ENCODE measurements at regions of chr3 and their contacts with region 1.

Region 1: GRCh38 chr3:170357176-170357919 is at the start of gene SKIL:
- DNase-seq: peak; percentile 96
- H3K4me3 Mint-ChIP-seq: peak within 1 kb of the TSS; percentile 77
- H3K27ac Mint-ChIP-seq: peak within 1 kb of the TSS; percentile 94
- H3K4me1 Mint-ChIP-seq: peaks cover 42% of the 10 kb centered on the region
- H3K27me3 Mint-ChIP-seq: no peaks in the 10 kb centered on the region
- total RNA-seq, gene SKIL: 20.9 to 22.7 TPM

Region 2: GRCh38 chr3:169812332-169813235 is 544.8 kb before region 1 on chr3 and contains the starts of genes LRRC34 and LRRIQ4:
- CTCF ChIA-PET with region 1: no interaction called
- POLR2A ChIA-PET with region 1: no interaction called
- intact Hi-C with region 1: loop called (anchors 5 kb)
- DNase-seq: peak; percentile 88
- H3K4me3 Mint-ChIP-seq: peak within 1 kb of the TSS; percentile 75
- H3K27ac Mint-ChIP-seq: peak within 1 kb of the TSS; percentile 43
- H3K4me1 Mint-ChIP-seq: peaks cover 19% of the 10 kb centered on the region
- H3K27me3 Mint-ChIP-seq: no peaks in the 10 kb centered on the region
- total RNA-seq, gene LRRC34: 2.8 to 2.9 TPM
- total RNA-seq, gene LRRIQ4: 0.14 TPM in 1 of 2 experiments, not detected in the other

Region 3: DNA sequence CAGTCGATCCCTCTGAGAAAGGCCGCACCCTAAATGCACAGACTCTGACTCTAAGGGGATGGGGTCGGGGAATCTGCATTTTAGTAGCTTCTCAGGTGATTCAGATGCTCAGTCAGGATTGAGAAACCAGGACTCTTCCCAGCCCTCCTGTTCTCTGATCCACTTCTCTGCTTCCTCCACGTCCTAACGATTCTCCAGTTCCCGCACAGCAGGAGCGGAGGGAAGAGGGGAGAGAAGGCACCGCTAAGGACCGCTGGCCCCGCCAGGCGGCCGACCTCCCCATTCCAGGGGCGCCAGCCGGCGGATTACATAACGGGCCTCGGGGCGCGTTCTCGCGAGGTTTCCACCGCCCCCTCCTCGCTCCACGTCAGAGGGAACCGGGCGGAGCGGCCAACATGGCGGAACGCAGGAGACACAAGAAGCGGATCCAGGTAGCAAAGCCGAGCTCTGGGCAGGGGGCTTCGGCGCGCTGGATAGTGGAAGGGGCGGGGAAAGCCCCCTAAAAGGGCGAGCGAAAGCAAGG is 390.9 kb before region 1 on chr3 and contains the start of gene SEC62:
- CTCF ChIA-PET with region 1: no interaction called
- POLR2A ChIA-PET with region 1: no interaction called
- intact Hi-C with region 1: loop called (anchors 5 kb)
- DNase-seq: peak; percentile 97
- H3K4me3 Mint-ChIP-seq: peak within 1 kb of the TSS; percentile 80
- H3K27ac Mint-ChIP-seq: peak within 1 kb of the TSS; percentile 96
- H3K4me1 Mint-ChIP-seq: peaks cover 59% of the 10 kb centered on the region
- H3K27me3 Mint-ChIP-seq: no peaks in the 10 kb centered on the region
- total RNA-seq, gene SEC62: 59.7 to 60.7 TPM

Region 4: GRCh38 chr3:170221924-170222646 is 135.3 kb before region 1 on chr3 and contains the start of gene PRKCI:
- CTCF ChIA-PET with region 1: no interaction called
- POLR2A ChIA-PET with region 1: interaction called, 11 read pairs
- intact Hi-C with region 1: loop called (anchors 1 kb)
- DNase-seq: peak; percentile 95
- H3K4me3 Mint-ChIP-seq: peak within 1 kb of the TSS; percentile 93
- H3K27ac Mint-ChIP-seq: peak within 1 kb of the TSS; percentile 91
- H3K4me1 Mint-ChIP-seq: peaks cover 25% of the 10 kb centered on the region
- H3K27me3 Mint-ChIP-seq: no peaks in the 10 kb centered on the region
- total RNA-seq, gene PRKCI: 27.0 to 27.6 TPM

Region 5: DNA sequence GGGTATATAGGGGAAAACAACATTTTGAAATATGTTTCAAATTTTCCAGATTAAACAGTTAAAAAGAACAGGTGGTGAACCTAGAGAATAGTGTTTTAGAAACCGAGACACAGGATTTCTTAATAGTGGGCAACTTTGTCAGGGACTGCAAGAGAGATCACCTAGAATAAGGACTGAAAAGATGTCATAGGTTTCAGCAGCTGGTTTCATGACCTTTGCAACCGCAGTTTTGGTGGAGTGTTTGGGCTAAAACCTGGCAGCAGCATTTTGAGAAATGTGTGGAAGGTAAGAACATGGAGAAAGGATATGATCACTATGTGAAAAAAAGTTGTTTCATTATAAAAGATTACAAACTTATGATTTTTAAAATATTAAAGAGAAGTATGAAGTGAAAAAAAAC is 100.2 kb before region 1 on chr3:
- CTCF ChIA-PET with region 1: no interaction called
- POLR2A ChIA-PET with region 1: interaction called, 4 read pairs
- intact Hi-C with region 1: loop called (anchors 1 kb)
- DNase-seq: peak; percentile 64
- H3K4me3 Mint-ChIP-seq: no peak overlapping the region
- H3K27ac Mint-ChIP-seq: peak overlapping the region; percentile 26
- H3K4me1 Mint-ChIP-seq: peaks cover 40% of the 10 kb centered on the region
- H3K27me3 Mint-ChIP-seq: no peaks in the 10 kb centered on the region

Region 6: GRCh38 chr3:170307671-170308403 is 49.5 kb before region 1 on chr3:
- CTCF ChIA-PET with region 1: interaction called, 3 read pairs
- POLR2A ChIA-PET with region 1: no interaction called
- intact Hi-C with region 1: loop called (anchors 5 kb)
- DNase-seq: no peak
- H3K4me3 Mint-ChIP-seq: no peak overlapping the region
- H3K27ac Mint-ChIP-seq: no peak overlapping the region
- H3K4me1 Mint-ChIP-seq: no peaks in the 10 kb centered on the region
- H3K27me3 Mint-ChIP-seq: no peaks in the 10 kb centered on the region

Region 7: GRCh38 chr3:170869645-170870593 is 512.6 kb after region 1 on chr3 and contains the start of gene RPL22L1:
- CTCF ChIA-PET with region 1: no interaction called
- POLR2A ChIA-PET with region 1: interaction called, 15 read pairs
- intact Hi-C with region 1: loop called (anchors 2 kb)
- DNase-seq: peak; percentile 95
- H3K4me3 Mint-ChIP-seq: peak within 1 kb of the TSS; percentile 97
- H3K27ac Mint-ChIP-seq: peak within 1 kb of the TSS; percentile 98
- H3K4me1 Mint-ChIP-seq: peaks cover 22% of the 10 kb centered on the region
- H3K27me3 Mint-ChIP-seq: no peaks in the 10 kb centered on the region
- total RNA-seq, gene RPL22L1: 379 to 382 TPM